Esophagus muscularis mucosa (tissue), 4 donors: ENCODE measurements at regions of chr1 and their contacts with region 1.

Region 1: DNA sequence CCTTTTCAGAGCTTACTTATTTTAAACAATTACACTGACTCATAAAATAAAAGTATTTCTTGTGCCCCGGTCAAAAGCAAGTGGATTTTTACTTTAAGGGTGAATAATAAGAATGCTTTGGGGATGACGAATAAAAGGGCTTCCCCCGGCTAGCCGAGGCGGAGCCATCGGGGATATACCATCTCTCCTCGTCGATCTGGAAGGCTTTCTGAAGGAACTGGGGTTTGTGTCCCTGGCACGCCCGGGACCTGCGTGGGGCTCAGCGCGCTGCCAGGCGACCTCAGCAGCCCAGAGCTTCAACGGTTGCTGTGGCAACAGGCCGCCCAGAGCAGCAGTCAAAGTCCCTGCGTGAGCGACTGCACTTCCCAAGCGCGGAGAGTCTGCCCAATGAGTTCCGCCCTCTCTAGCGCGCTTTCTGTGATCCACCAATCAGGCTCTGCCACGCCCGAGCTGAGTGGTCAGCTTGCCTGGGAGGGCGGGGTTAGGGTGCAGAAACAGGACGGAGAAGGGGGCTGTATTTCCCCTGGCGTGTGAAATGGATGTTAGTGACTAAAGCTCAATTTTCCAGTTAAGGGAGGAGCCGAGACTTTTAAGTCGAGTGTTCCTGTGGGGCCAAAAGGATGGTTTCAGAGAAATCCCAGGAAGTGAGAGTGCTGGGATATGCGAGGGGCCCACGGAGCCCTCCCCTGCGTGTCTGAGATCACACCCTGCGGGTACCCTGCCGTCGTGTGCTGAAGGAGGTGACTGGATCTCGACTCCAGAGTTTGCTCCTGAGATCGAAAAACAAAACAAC is 33.0 kb upstream of the MGST3 start:
- DNase-seq: peak; percentile 99
- H3K4me3 ChIP-seq: peak overlapping the region; percentile 58 to 66 (median 60)
- H3K27ac ChIP-seq: peak overlapping the region; percentile 65 to 80 (median 72)
- H3K4me1 ChIP-seq: peaks cover 4 to 15% (median 11%) of the 10 kb centered on the region in 4 donors
- H3K27me3 ChIP-seq: peaks cover 0 to 8% (median 0%) of the 10 kb centered on the region in 4 donors
- CTCF ChIP-seq: no peak
- EP300 ChIP-seq: no peak
- POLR2A ChIP-seq: no peak

Region 2: DNA sequence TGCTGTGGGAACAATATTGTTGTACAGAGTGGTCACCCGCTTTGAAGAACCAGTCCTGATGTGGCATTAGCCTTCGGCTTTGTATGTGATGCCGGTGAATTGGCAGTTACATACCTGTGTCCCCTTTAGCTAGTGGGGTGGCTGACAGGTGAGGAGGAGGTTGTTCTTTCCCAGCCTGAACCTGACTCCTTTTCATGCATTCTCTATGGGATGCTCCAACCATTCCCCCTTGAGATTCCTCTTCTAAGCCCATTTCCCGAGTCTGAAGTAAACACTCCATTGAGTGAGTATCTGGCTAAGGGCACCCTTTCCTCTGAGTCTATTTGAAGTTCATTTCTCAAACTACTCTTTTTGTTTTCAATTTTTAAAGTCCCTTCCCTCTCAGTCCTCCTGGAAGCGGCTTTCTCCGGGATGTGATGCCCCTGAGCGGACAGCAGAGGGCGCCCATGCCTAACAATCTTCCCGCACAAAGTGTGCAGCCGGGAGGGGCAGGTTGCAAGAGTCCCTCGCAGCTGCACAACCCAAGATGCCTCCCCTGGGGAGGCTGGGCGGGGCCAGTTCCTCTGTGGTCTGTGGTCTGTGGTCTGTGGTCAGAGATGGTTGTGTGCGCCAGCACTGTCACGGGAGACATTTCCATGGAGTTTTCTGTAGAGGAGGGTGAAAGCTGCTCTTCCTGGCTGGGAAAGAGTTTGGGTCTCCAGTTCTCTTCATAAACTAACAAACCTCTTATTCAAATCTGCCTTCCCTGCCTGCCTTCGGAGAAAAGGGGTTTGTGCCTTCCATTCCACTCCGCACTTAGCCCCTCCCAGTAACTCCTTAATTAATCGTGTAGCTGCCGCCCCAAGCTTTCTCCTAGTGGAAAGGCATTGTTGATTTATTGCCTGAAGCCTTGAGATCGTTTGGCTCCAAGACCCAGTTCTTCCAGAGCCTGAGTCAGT is 205.2 kb before region 1 on chr1:
- intact Hi-C with region 1: loop called (anchors 1 kb)
- DNase-seq: peak; percentile 94
- H3K4me3 ChIP-seq: peak overlapping the region; percentile 27 to 48 (median 32)
- H3K27ac ChIP-seq: no peak overlapping the region
- H3K4me1 ChIP-seq: peaks cover 5 to 16% (median 14%) of the 10 kb centered on the region in 4 donors
- H3K27me3 ChIP-seq: no peaks in the 10 kb centered on the region
- CTCF ChIP-seq: peak; percentile 92 to 97 (median 95)
- EP300 ChIP-seq: no peak
- POLR2A ChIP-seq: no peak

Region 3: DNA sequence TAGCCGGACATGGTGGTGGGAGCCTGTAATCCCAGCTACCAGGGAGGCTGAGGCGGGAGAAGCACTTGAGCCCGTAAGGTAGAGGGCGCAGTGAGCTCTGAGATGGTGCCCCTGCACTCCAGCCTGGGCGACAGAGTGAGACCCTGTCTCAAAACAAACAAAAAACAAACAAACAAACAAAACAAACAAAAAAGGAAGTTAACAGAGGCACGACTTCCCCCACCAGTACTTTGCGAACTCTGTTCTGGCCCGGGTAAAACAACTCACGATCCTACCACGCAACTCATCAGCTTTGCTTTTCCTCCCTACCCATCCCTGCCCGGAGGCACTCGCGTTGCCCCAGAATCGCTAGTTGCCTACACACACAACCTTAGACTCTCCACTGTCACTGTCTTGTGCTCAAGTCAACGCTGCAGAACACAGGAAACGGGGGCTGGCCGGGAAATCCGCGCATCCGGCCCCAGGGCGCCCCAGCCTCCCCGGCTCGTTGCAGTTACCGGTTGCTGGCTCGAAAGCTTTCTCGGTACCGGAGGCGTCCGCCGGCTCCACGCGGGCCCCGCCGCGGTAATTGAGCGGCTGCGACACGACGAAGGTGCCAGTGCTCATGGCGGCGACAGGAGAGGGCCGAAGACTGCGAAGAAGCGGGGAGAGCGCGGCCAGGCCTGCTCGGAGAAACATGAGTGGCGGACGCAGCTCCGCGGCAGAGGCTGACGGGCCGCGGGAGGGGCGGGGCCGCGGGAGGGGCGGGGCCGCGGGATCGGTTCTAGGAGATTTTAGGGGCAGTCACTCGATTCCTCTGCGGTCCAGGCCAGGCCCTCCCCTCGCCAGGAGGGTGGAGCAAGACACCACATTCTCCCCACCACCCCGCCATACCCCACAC is 100.0 kb after region 1 on chr1 and contains the start of gene ALDH9A1:
- intact Hi-C with region 1: loop called (anchors 2 kb)
- DNase-seq: peak; percentile 96
- H3K4me3 ChIP-seq: peak within 1 kb of the TSS; percentile 57 to 91 (median 78)
- H3K27ac ChIP-seq: peak within 1 kb of the TSS; percentile 91 to 96 (median 94)
- H3K4me1 ChIP-seq: peaks cover 20 to 35% (median 31%) of the 10 kb centered on the region in 4 donors
- H3K27me3 ChIP-seq: peaks cover 0 to 1% (median 0%) of the 10 kb centered on the region in 4 donors
- CTCF ChIP-seq: peak; percentile 29 to 42 (median 38)
- EP300 ChIP-seq: no peak
- POLR2A ChIP-seq: peak; percentile 38
- total RNA-seq, gene ALDH9A1: 42.6 to 73.1 (median 66.1) TPM

Region 4: GRCh38 chr1:165988275-165988674 is 390.2 kb after region 1 on chr1:
- intact Hi-C with region 1: no loop called
- DNase-seq: no peak
- H3K4me3 ChIP-seq: no peak overlapping the region
- H3K27ac ChIP-seq: no peak overlapping the region
- H3K4me1 ChIP-seq: no peaks in the 10 kb centered on the region
- H3K27me3 ChIP-seq: no peaks in the 10 kb centered on the region
- CTCF ChIP-seq: no peak
- EP300 ChIP-seq: no peak
- POLR2A ChIP-seq: no peak